Psoas muscle (tissue), 8 donors: ENCODE measurements at regions of chr19 and their contacts with region 1.

Region 1: GRCh38 chr19:35044317-35045117 is 3.0 kb downstream of the HPN start:
- DNase-seq: peak; percentile 63 to 82
- ATAC-seq: no peak
- H3K4me3 ChIP-seq: no peak overlapping the region
- H3K27ac ChIP-seq: peak overlapping the region; percentile 94
- H3K4me1 ChIP-seq: peaks cover 60% of the 10 kb centered on the region
- H3K27me3 ChIP-seq: no peaks in the 10 kb centered on the region
- CTCF ChIP-seq: peak; percentile 98

Region 2: GRCh38 chr19:35090506-35091237 is 46.2 kb after region 1 on chr19:
- intact Hi-C with region 1: loop called (anchors 1 to 5 kb)
- DNase-seq: peak in 1 of 2 donors; percentile 41
- ATAC-seq: peak; percentile 85 to 95 (median 88)
- H3K4me3 ChIP-seq: peak overlapping the region; percentile 52
- H3K27ac ChIP-seq: peak overlapping the region; percentile 23
- H3K4me1 ChIP-seq: peaks cover 3% of the 10 kb centered on the region
- H3K27me3 ChIP-seq: no peaks in the 10 kb centered on the region
- CTCF ChIP-seq: peak; percentile 68

Region 3: GRCh38 chr19:35107546-35107945 is 63.0 kb after region 1 on chr19:
- intact Hi-C with region 1: no loop called
- DNase-seq: no peak
- ATAC-seq: peak in 1 of 4 donors; percentile 37
- H3K4me3 ChIP-seq: no peak overlapping the region
- H3K27ac ChIP-seq: no peak overlapping the region
- H3K4me1 ChIP-seq: no peaks in the 10 kb centered on the region
- H3K27me3 ChIP-seq: no peaks in the 10 kb centered on the region
- CTCF ChIP-seq: no peak